Activated B cell treated with CpG ODN at 0.5 μM for 24 hours (primary cell): ENCODE measurements at regions of chr17 and their contacts with region 1.

Region 1: DNA sequence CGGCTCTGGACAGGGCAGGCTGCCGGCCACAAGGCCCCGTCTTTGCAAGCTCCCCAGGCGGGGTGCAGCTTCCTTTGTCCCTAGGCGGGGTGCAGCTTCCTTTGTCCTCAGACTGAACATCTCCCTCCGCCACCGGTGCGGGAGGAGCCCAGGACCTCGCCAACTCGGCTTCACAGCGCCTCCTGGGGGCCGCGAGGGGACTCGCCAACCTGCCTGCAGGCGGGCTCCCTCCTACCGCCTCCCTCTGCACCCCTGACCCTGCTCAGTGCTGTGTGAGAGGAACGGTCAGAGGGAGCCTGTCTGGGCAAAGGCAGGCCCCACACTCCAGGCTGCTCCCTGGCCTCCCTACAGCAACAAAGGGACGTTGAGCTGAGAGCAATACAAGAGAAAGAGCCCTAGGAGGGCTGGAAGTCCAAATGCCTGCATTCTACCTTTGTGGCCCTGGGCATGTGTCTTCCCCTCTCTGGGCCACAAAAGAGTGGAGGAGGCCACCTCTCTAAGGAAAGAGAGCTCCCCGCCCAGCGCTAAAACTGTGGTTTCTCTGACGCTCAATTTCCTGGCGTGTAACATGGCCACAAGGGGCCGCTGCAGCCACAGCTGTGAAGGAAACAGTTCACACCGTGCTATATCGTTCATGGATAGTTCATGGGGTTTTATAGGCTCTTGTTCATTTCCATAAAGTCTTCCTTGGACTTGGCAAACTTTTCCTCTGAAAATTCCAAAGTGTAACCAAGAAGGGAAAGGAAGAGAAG is 20.9 kb upstream of the KRT19 start:
- DNase-seq: peak; percentile 50
- ATAC-seq: peak; percentile 87
- H3K4me3 Mint-ChIP-seq: peak overlapping the region; percentile 44
- H3K27ac Mint-ChIP-seq: no peak overlapping the region
- H3K4me1 Mint-ChIP-seq: peaks cover 8% of the 10 kb centered on the region
- H3K27me3 Mint-ChIP-seq: peaks cover 39% of the 10 kb centered on the region
- CTCF ChIP-seq: no peak

Region 2: DNA sequence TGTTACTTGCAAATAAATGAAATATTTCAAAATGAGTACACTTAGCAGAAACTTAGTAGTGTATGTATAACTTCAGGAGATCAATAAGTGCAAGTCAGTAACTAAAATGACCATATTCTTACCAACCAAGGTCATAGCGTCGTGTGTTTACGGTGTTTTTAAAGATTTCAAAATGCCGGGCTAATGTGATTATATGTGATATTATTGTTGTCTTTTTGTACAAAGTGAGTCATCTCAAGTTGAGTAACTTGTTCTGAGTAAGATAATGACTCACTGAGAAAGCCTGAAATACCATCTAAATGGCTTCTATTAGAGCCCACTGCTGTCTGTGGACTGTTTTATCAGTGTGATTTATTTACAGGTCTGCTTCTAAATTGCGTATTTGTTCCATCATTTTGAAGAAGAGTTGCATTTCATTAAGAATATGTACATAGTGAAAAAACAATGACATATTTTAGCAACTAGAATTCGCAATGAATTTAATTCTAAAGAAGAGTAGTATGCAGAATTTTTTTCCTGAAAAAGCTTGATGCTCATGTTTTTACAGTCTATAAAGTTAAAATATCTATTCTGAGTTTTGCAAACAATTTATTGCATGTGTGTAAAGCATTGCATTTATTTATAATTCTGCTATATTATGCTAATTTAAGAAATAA is 694.7 kb before region 1 on chr17:
- CTCF ChIA-PET with region 1: interaction called, 3 read pairs
- POLR2A ChIA-PET with region 1: no interaction called
- intact Hi-C with region 1: loop called (anchors 2 kb)
- DNase-seq: no peak
- ATAC-seq: no peak
- H3K4me3 Mint-ChIP-seq: no peak overlapping the region
- H3K27ac Mint-ChIP-seq: no peak overlapping the region
- H3K4me1 Mint-ChIP-seq: no peaks in the 10 kb centered on the region
- H3K27me3 Mint-ChIP-seq: peaks cover 20% of the 10 kb centered on the region
- CTCF ChIP-seq: no peak

Region 3: DNA sequence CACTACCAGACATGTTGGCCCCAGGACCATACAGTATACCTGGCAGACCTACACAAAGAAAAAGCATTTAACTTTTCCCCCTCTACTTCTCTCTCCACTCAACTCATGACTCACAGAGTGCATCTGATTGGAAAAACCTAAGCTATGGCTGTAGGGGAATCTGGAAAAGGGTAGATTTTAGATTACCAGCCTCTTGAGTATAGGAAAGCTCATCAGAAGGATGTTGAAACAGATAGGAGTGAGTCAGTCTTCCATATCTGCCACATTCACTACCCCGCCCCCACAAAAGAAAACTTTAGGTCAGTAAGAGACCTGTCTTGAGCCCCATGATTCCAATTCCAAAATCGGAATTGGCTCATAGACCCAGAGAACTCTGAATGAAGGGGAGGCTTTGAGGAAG is 10.5 kb after region 1 on chr17:
- CTCF ChIA-PET with region 1: interaction called, 18 read pairs
- POLR2A ChIA-PET with region 1: no interaction called
- intact Hi-C with region 1: no loop called
- DNase-seq: no peak
- ATAC-seq: no peak
- H3K4me3 Mint-ChIP-seq: no peak overlapping the region
- H3K27ac Mint-ChIP-seq: no peak overlapping the region
- H3K4me1 Mint-ChIP-seq: no peaks in the 10 kb centered on the region
- H3K27me3 Mint-ChIP-seq: peaks cover 45% of the 10 kb centered on the region
- CTCF ChIP-seq: no peak